Right ventricle myocardium inferior (tissue), 1 donor: ENCODE measurements at regions of chr17 and their contacts with region 1.

Region 1: DNA sequence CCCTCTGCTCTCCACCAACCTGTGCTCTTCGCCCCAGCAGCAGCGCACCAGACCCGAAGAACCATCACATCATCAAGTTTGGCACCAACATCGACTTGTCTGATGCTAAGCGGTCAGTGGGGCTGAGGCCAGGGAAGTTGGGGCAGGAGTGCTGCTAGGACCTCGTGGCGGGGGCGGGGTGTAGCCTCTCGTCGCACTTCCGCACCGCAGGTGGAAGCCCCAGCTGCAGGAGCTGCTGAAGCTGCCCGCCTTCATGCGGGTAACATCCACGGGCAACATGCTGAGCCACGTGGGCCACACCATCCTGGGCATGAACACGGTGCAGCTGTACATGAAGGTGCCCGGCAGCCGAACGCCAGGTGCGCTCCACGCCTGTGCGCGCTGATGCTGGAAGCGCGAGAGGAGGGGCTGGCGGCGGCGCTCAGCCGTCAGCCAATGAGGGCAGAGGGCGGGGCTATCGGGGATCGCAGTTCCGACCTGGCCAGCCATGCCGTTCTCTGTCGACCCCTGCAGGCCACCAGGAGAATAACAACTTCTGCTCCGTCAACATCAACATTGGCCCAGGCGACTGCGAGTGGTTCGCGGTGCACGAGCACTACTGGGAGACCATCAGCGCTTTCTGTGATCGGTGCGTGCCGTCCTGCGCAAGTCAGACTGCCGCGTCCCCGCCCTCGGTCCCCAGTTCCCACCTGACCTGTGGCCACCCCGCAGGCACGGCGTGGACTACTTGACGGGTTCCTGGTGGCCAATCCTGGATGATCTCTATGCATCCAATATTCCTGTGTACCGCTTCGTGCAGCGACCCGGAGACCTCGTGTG is 3.2 kb upstream of the TMEM88 start:
- DNase-seq: peak; percentile 93
- ATAC-seq: peak; percentile 73

Region 2: DNA sequence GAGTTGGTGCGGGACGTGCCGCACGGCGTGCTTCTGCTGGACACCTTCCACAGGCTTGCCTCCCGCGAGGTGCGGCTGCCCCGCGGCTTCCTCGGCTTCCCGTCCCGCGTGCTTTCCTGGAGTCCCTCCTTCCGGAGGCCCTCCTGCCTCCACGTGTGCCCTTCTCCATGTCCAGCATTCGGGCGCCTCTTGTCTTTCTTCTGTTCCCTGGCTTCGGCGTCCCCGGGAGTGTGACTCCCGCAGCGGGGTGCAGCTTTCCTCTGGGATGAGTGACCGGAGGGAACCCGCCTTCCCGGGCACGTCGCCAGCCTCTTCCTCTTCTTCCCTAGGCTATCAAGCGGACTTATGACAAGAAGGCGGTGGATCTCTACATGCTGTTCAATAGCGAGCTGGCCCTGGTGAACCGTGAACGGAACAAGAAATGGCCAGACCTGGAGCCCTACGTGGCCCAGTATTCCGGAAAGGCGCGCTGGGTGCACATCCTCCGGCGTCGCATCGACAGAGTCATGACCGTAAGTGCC is 111.1 kb before region 1 on chr17:
- intact Hi-C with region 1: loop called (anchors 2 kb)
- DNase-seq: no peak
- ATAC-seq: no peak

Region 3: DNA sequence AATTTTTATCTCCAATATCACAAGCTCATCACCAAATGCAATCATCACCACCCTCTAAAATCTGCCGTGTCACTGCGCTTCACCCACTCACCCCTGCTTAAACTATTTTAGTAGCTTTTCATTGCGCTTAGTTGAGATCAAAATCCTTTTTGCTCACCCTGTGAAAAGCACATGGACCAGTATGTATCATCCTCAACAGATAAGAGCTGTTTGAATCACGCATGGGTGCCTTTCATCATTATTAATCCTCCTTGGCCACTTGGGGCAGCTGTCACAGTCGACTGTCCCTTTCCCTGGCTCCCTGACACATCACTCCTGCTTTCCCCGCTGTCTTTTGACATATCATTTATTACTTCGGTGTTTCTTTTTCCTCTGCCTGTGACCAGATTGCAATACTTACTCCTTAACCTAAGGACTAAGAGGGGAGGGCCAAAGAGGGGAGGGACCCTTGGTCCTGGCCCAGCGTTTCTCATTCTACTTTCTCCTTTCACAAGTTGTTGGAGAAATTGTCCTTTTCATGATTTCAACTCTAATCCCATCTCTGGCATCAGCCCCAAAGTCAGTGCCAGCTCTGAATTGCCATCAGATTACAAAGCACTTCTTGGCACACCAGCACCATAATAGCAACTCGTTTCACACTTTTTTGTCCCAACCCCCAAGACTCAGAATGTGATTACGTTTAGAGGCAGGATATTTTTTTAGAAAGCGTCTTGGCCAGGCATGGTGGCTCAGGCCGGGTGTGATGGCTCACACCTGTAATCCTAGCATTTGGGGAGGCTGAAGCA is 26.2 kb before region 1 on chr17:
- intact Hi-C with region 1: loop called (anchors 1 kb)
- DNase-seq: no peak
- ATAC-seq: no peak

Region 4: DNA sequence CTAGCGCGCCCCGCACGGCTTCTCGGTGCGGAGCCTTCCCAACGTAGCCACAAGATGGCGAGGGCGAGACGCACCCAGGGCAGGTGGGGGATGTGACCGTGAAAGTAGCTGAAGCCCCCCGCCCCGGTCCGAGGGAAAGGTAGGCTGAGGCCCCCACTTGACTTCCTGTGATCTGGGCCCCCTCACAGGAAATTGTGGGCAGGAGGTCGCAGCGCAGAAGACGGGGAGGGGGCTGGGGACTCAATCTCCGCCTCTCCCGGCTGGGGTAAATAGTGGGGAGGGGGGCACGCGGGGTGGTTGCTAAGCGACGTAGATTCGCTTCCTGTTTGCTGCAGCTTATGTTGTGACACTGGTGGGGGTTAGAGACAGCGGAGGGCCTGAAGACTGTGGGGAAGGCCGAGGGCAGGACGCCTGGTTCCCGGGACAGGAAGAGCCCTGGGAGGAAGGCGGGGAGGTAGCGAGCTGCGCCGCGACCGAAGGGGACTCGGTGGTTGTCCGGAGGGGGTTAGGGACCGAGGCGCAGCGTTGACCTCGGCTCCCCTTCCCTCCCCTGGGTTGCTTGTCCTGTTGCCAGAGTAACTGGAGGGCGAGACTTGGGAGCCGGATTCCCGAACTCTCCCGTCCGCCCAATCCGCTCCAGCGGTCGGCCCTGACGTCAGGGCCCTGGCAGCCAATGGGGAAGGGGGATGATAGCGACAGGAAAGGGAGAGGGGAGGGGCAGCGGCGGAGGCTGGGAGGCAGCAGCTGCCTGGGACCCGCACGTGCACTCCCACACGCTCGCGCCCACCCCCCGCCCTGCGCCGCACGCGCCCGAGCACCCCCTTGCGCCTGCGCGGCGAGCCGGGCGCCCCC is 16.5 kb before region 1 on chr17:
- intact Hi-C with region 1: loop called (anchors 2 kb)
- DNase-seq: peak; percentile 99
- ATAC-seq: peak; percentile 77